ENCODE measurements at regions of chr7 and their contacts with region 1.

Region 1: DNA sequence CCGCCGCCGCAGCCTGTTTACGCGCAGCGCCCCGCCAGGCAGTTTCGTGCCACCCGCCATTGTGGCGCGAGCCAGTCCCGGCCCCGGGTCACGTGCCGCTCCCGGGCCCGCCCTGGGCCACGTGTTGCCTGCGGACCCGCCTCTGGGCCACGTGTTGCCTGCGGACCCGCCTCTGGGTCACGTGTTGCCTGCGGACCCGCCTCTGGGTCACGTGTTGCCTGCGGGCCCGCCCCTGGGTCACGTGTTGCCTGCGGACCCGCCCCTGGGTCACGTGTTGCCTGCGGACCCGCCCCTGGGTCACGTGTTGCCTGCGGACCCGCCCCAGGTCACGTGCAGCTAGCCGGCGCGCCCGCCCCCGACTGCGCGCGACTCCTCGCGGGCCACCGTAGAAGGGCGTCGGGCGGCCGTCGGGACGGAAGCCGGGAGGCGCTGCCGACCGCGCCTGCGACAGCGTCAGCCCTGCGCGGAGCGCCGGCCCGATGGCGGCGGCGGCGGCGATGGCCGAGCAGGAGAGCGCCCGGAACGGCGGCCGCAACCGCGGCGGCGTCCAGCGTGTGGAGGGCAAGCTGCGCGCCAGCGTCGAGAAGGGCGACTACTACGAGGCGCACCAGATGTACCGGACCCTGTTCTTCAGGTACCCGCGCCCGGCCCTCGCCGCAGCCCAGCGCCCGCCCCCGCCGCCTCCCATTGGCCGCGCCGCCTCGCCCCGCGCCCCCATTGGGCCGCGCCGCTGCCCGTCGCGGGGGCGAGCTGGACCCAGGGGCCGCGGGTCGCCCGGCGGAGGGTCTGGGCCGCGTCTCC is at the start of gene GET4:
- DNase-seq: peak; percentile 92
- CTCF ChIP-seq: peak; percentile 22

Region 2: DNA sequence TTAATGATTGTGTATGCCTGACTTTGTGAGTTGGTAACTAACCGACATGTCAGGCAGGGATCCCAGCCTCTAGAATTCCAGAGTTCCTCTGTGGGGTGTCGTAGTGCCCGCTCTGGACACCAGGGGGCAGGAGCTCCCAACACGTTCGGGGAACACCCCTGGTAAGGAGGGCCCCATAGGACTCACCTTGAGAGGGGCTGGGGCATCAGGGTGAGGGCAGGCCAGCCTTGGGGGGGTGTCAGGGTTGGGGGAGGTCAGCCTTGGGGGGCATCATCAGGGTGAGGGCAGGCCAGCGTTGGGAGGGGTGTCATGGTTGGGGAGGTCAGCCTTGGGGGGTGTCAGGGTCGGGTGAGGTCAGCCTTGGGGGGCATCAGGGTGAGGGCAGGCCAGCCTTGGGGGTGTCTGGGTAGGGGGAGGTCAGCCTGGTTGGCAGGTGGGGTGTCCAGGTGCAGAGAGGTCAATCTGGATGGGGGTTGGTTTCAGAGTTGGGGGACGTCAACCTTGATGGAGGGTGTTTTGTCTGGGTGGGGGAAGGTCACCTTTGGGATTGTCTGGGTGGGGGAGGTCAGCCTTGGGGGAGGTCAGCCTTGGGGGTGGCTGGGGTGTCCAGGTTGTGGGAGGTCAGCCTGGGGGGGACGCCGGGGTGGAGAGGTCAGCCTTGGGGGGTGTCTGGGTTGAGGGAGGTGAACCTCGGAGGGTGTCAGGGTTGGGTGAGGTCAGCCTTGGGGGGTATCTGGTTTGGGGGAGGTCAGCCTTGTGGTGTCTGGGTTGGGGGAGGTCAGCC is 89.7 kb before region 1 on chr7:
- in situ Hi-C with region 1: loop called (anchors 5 kb)
- DNase-seq: peak; percentile 90
- CTCF ChIP-seq: peak; percentile 69

Region 3: DNA sequence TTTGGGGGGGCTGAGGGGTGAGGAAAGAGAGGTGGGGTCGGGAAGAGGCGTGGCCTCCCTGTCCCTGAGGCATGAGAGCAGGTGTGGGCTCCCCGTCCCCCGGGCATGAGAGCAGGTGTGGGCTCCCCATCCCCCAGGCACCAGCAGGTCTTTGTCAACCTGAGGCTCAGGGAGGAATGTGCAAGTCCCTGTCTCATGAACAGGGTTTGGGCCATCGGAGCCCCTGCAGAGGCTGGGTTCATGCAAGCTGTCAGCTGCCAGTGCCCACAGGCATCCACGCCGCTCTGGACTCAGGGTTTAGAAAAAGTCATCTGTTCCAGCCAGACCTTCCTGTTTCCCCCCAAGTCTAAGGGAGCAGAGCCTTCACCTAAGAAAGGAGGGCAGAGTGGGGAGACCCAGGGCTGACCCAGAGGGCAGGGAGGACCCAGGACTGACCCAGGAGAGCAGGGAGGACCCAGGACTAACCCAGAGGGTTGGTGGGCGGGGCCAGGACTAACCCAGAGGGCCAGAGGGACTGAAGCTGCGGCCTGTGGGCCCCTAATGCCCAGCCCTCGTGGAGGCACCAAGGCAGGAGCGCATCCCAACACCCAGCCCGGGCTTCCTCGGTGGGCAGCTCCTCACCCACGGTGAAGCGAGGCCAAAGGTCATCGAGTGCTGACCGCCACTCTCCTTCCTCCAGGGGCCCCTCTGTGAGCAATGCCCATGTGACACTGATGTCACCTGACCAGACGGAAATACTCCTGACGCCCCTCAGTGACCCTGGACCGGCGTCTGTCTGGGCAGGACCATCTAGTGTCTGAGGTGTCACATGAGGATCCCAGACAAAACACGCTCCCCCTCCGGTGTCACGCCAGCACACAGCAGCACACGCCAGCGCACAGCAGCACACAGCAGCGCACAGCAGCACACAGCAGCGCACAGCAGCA is 139.1 kb after region 1 on chr7:
- in situ Hi-C with region 1: no loop called
- DNase-seq: no peak
- CTCF ChIP-seq: no peak